Activated CD4-positive, alpha-beta memory T cell treated with anti-CD3 and anti-CD28 coated beads, Interleukin-2, amount 10 ng/mL, durations not matched to agents 7 days and 5 days (primary cell): ENCODE measurements at regions of chr17 and their contacts with region 1.

Region 1: DNA sequence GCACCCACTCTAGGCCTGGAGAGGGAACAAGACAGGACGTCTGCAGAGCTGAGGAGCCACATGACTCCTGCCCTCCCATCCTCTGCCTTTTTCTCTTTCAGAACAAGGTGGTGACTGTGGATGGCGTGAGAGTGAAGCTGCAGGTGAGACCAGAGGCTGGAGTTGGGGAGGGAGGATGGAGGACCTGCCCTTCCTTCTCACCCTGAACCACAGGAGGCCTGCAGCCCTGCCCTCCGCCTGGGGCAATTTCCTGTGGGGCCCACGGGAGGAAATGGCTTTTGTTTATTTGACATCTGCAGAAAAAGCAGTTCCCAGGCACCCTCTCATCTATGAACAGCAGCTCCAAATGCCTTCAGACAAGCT is 5.1 kb downstream of the RAB37 start:
- DNase-seq: peak; percentile 84
- H3K4me3 Mint-ChIP-seq: peak overlapping the region; percentile 69
- H3K27ac Mint-ChIP-seq: peak overlapping the region; percentile 91
- H3K4me1 Mint-ChIP-seq: peaks cover 91% of the 10 kb centered on the region
- H3K27me3 Mint-ChIP-seq: no peaks in the 10 kb centered on the region

Region 2: GRCh38 chr17:74770498-74771318 is 28.6 kb after region 1 on chr17:
- CTCF ChIA-PET with region 1: interaction called, 32 read pairs
- POLR2A ChIA-PET with region 1: interaction called, 28 read pairs
- DNase-seq: peak; percentile 78
- H3K4me3 Mint-ChIP-seq: no peak overlapping the region
- H3K27ac Mint-ChIP-seq: peak overlapping the region; percentile 48
- H3K4me1 Mint-ChIP-seq: peaks cover 42% of the 10 kb centered on the region
- H3K27me3 Mint-ChIP-seq: no peaks in the 10 kb centered on the region

Region 3: DNA sequence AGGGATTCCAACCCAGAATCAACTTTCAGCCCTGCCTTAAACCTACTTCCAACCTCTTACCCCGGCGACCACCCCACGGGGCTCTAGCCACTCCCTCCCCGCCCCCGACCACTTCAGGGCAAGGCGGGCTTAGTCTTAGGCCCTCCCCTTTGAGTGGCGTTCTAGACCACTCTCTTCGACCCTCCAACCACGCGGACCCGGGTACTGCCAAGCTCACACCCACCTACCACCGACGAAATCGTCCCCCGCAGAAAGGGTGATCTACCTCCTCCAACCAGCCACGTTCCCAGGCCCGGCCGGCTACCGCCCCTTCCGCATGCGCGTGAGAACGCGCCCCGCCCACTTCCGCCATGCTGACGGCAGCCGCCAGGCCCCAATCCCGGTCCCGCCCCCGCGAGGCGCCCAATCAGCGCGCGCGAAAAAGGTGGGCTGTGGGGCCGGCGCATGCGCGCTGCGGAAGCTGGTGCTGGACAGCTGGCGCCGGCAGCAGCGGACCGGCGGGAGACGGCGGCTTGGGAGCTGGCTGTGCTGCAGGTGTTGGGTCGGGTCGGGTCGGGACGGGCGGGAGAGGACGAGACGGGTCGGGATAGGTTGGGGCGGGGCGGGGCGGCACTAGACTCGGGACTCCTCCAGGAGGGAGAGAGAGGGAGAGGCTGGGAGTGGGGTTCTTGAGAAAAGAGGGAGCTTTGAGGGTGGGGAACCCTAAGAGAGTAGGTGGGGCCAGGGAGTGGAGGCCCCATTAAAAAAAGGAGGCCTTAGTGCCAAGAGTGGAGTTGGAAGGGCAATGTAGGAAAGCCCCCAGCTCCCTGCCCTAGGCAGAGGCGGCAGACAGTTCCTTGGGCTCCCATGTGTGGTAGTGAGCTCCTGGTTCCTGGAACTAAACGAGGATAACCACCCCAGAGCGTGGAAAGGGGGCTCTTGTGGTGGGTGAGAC is 34.2 kb after region 1 on chr17 and contains the start of gene NAT9:
- CTCF ChIA-PET with region 1: interaction called, 32 read pairs
- POLR2A ChIA-PET with region 1: interaction called, 68 read pairs
- DNase-seq: peak; percentile 99
- H3K4me3 Mint-ChIP-seq: peak within 1 kb of the TSS; percentile 99
- H3K27ac Mint-ChIP-seq: peak within 1 kb of the TSS; percentile 85
- H3K4me1 Mint-ChIP-seq: peaks cover 68% of the 10 kb centered on the region
- H3K27me3 Mint-ChIP-seq: no peaks in the 10 kb centered on the region
- total RNA-seq, gene NAT9: 32.1 to 32.3 TPM